ENCODE measurements at regions of chr11 and their contacts with region 1.

Region 1: GRCh38 chr11:66344550-66345315 is at the start of gene BRMS1:
- DNase-seq: peak; percentile 98
- ATAC-seq: peak; percentile 80
- H3K4me3 Mint-ChIP-seq: peak within 1 kb of the TSS; percentile 93
- H3K27ac Mint-ChIP-seq: peak within 1 kb of the TSS; percentile 90
- H3K4me1 Mint-ChIP-seq: peaks cover 45% of the 10 kb centered on the region
- H3K27me3 Mint-ChIP-seq: peaks cover 3% of the 10 kb centered on the region
- total RNA-seq, gene BRMS1: 29.2 to 30.2 TPM

Region 2: DNA sequence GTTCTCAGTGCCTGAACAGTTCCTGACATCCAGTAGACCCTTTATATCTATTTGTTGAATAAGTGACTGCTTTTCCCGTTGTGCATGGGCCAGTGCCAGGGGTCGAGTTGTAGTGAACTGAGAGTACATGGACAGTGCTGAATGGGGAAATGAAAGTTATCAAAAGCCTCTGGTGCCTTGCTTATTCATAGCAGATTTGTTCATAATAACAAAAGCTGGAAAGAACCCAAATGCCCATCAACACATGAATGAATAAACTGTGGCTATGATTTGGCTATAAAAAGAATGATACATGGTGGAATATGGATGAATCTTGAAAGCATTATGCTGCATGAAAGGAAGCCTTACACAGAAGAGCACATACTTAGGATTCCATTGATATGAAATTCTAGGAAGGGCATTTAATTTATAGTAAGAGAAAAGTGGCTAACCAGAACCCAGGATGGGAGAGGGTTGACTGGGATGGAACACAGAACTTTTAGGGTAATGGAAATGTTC is 232.1 kb before region 1 on chr11:
- CTCF ChIA-PET with region 1: no interaction called
- POLR2A ChIA-PET with region 1: no interaction called
- intact Hi-C with region 1: no loop called
- DNase-seq: no peak
- ATAC-seq: no peak
- H3K4me3 Mint-ChIP-seq: no peak overlapping the region
- H3K27ac Mint-ChIP-seq: peak overlapping the region; percentile 91
- H3K4me1 Mint-ChIP-seq: peaks cover 96% of the 10 kb centered on the region
- H3K27me3 Mint-ChIP-seq: no peaks in the 10 kb centered on the region

Region 3: GRCh38 chr11:66268283-66268951 is 76.3 kb before region 1 on chr11 and contains the start of gene RAB1B:
- CTCF ChIA-PET with region 1: no interaction called
- POLR2A ChIA-PET with region 1: no interaction called
- intact Hi-C with region 1: loop called in 1 of 2 experiments (anchors 1 kb)
- DNase-seq: peak; percentile 100
- ATAC-seq: peak; percentile 88
- H3K4me3 Mint-ChIP-seq: peak within 1 kb of the TSS; percentile 100
- H3K27ac Mint-ChIP-seq: peak within 1 kb of the TSS; percentile 97
- H3K4me1 Mint-ChIP-seq: peaks cover 28% of the 10 kb centered on the region
- H3K27me3 Mint-ChIP-seq: no peaks in the 10 kb centered on the region
- total RNA-seq, gene RAB1B: 114 to 147 TPM

Region 4: DNA sequence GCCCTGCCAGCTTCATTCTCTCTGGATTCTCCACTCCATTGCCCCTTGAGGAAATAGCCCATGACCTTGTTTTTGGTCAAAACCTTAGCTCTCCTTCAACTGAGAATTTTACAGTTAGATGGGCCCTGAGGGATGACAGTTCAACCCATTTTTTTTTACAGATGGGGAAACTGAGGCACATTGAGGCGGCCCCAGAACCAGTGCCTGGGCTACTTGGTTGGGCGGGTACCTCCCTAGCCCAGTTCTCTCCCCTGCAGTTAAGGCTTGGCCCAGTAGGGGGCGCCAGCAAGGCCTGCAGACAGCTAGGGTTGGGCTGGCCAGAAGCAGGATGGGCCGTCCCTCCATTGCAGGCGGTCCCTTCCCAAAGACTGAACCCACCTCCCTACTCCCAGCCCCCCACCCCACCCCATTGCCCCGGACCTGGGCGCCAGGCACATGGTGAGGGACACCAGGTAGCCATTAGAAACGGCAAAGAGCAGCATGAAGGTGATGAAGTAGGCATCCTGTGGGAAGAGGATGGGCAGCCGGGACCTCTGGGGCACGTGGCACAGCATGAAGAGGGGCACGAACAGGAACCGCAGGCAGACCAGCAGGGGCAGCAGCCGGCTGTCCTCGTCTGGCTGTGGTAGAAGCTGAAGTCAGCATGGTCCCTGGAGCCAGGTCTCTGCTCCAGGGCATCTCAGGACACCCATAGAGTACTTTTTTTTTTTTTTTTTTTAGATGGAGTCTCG is 19.2 kb after region 1 on chr11:
- CTCF ChIA-PET with region 1: interaction called, 20 read pairs
- POLR2A ChIA-PET with region 1: interaction called, 3 read pairs
- intact Hi-C with region 1: no loop called
- DNase-seq: peak; percentile 88
- ATAC-seq: peak; percentile 82
- H3K4me3 Mint-ChIP-seq: no peak overlapping the region
- H3K27ac Mint-ChIP-seq: no peak overlapping the region
- H3K4me1 Mint-ChIP-seq: no peaks in the 10 kb centered on the region
- H3K27me3 Mint-ChIP-seq: no peaks in the 10 kb centered on the region

Region 5: GRCh38 chr11:66371627-66372415 is 27.1 kb after region 1 on chr11 and contains the start of gene SLC29A2:
- CTCF ChIA-PET with region 1: interaction called, 5 read pairs
- POLR2A ChIA-PET with region 1: interaction called, 3 read pairs
- intact Hi-C with region 1: loop called in 1 of 2 experiments (anchors 1 kb)
- DNase-seq: peak; percentile 92
- ATAC-seq: peak; percentile 87
- H3K4me3 Mint-ChIP-seq: peak within 1 kb of the TSS; percentile 91
- H3K27ac Mint-ChIP-seq: peak within 1 kb of the TSS; percentile 91
- H3K4me1 Mint-ChIP-seq: peaks cover 19% of the 10 kb centered on the region
- H3K27me3 Mint-ChIP-seq: no peaks in the 10 kb centered on the region
- total RNA-seq, gene SLC29A2: 13.6 to 14.4 TPM

Region 6: GRCh38 chr11:66408488-66409214 is 63.9 kb after region 1 on chr11:
- CTCF ChIA-PET with region 1: no interaction called
- POLR2A ChIA-PET with region 1: no interaction called
- intact Hi-C with region 1: no loop called
- DNase-seq: peak; percentile 97
- ATAC-seq: peak; percentile 86
- H3K4me3 Mint-ChIP-seq: peak overlapping the region; percentile 67
- H3K27ac Mint-ChIP-seq: no peak overlapping the region
- H3K4me1 Mint-ChIP-seq: peaks cover 2% of the 10 kb centered on the region
- H3K27me3 Mint-ChIP-seq: peaks cover 20% of the 10 kb centered on the region

Region 7: GRCh38 chr11:66592457-66593302 is 247.9 kb after region 1 on chr11 and contains the starts of genes CCDC87 and CCS:
- CTCF ChIA-PET with region 1: no interaction called
- POLR2A ChIA-PET with region 1: no interaction called
- intact Hi-C with region 1: loop called in 1 of 2 experiments (anchors 1 kb)
- DNase-seq: peak; percentile 99
- ATAC-seq: peak; percentile 100
- H3K4me3 Mint-ChIP-seq: peak within 1 kb of the TSS; percentile 93
- H3K27ac Mint-ChIP-seq: peak within 1 kb of the TSS; percentile 98
- H3K4me1 Mint-ChIP-seq: peaks cover 19% of the 10 kb centered on the region
- H3K27me3 Mint-ChIP-seq: no peaks in the 10 kb centered on the region
- total RNA-seq, gene CCDC87: 0.09 to 0.14 TPM
- total RNA-seq, gene CCS: 16.3 to 24.0 TPM

Region 8: GRCh38 chr11:66868726-66869566 is 524.2 kb after region 1 on chr11:
- CTCF ChIA-PET with region 1: no interaction called
- POLR2A ChIA-PET with region 1: no interaction called
- intact Hi-C with region 1: no loop called
- DNase-seq: peak; percentile 93
- ATAC-seq: peak; percentile 97
- H3K4me3 Mint-ChIP-seq: no peak overlapping the region
- H3K27ac Mint-ChIP-seq: peak overlapping the region; percentile 51
- H3K4me1 Mint-ChIP-seq: peaks cover 16% of the 10 kb centered on the region
- H3K27me3 Mint-ChIP-seq: no peaks in the 10 kb centered on the region